Sciatic nerve (tissue), 2 donors: ENCODE measurements at regions of chr2 and their contacts with region 1.

Region 1: GRCh38 chr2:9003616-9004337 is at the start of gene MBOAT2:
- DNase-seq: peak; percentile 93
- ATAC-seq: peak; percentile 97
- total RNA-seq, gene MBOAT2: 67.6 TPM

Region 2: GRCh38 chr2:8876628-8877027 is 127.1 kb before region 1 on chr2:
- intact Hi-C with region 1: loop called (anchors 5 kb)
- DNase-seq: no peak
- ATAC-seq: no peak

Region 3: DNA sequence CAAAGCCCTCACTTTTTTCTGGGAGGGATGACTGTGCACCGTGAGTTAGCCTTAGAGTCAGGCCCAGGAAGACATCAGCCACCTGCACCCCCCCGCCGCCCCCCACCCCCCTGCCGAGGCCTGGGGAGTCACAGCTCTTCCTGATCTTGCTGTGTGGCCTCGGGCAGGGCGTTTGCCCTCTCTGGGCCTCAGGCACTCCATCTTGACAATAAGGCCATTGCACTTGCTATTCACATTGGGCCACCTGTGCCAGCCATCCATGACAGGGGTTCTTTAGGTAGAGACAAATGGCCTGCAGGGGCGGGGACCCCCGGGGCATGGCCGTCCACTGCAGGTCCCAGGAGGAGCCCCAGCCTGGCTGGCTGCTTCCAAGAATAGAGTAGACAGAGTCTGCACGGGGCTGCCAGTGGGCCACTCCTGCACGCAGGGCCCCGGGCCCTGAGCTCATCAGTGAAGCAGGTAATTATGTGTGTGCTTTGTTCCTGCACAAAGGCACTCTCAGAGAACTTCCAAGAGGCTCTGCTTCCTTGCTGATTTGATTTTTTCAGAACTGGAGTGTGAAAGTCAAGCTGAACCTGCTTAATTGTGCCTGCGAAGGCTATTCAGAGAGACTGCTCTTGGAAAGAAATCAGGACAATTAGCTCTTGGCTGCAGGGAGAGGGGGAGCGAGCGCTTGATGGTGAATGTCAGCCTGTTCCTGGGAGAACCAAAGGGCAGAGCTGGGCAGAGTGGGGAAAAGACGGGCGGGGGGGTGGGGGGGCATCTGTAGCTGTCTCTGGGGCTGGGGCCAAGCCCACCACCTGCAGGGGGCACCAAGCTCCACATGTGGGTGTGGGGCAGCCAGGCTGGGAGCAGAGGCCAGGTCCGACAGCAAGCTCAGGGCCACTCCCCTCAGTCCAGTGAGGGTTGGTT is 1159.1 kb after region 1 on chr2:
- intact Hi-C with region 1: loop called (anchors 5 kb)
- DNase-seq: no peak
- ATAC-seq: no peak